ENCODE measurements at regions of chr22 and their contacts with region 1.

Region 1: DNA sequence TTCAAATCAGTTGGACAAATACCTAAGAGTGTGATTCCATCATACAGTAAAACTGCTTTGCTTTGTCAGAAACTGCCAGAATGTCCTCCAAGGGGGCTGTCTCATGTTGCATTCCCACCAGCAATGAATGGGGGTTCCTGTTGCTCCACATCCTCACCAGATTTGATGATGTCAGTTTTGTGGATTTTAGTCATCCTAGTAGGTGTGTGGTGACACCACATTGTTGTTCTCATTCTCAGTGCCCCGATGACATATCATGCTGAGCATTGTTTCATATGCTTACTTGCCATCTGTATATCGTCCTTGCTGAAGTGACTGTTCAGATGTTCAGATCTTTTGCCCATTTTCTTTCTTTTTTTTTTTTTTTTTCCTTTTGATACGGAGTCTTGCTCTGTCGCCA is 37.0 kb downstream of the CDPF1 start:
- DNase-seq: no peak
- ATAC-seq: no peak
- H3K4me3 ChIP-seq: no peak overlapping the region
- H3K4me3 Mint-ChIP-seq: no peak overlapping the region
- H3K27ac ChIP-seq: no peak overlapping the region
- H3K27ac Mint-ChIP-seq: no peak overlapping the region
- H3K4me1 ChIP-seq: no peaks in the 10 kb centered on the region
- H3K4me1 Mint-ChIP-seq: no peaks in the 10 kb centered on the region
- H3K27me3 ChIP-seq: no peaks in the 10 kb centered on the region
- H3K27me3 Mint-ChIP-seq: no peaks in the 10 kb centered on the region

Region 2: DNA sequence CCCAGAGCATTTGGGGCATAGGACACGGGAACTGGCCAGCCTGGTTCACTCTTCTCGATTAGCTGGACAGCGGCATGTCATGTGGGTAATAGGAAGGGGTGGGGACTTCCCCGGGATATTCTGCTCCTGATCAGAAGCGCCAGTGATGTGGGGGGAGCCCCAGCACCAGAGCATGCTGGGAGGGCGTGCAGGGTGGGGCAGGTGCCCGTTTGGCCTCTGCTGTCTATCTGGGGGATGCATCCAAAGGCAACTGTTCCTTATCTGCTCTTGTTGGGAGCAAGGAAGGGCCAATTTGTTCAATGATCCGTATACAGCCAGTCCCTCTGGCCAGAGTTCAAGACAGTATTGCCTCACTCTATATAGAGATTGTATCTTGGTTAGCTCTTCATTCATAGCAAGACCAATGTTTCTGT is 19.1 kb before region 1 on chr22:
- CTCF ChIA-PET with region 1: interaction called in 1 of 2 experiments, 6 read pairs
- POLR2A ChIA-PET with region 1: interaction called in 1 of 2 experiments, 17 read pairs
- DNase-seq: no peak
- ATAC-seq: no peak
- H3K4me3 ChIP-seq: no peak overlapping the region
- H3K4me3 Mint-ChIP-seq: no peak overlapping the region
- H3K27ac ChIP-seq: no peak overlapping the region
- H3K27ac Mint-ChIP-seq: no peak overlapping the region
- H3K4me1 ChIP-seq: no peaks in the 10 kb centered on the region
- H3K4me1 Mint-ChIP-seq: peaks cover 0 to 1% (median 0%) of the 10 kb centered on the region in 3 donors
- H3K27me3 ChIP-seq: no peaks in the 10 kb centered on the region
- H3K27me3 Mint-ChIP-seq: no peaks in the 10 kb centered on the region

Region 3: DNA sequence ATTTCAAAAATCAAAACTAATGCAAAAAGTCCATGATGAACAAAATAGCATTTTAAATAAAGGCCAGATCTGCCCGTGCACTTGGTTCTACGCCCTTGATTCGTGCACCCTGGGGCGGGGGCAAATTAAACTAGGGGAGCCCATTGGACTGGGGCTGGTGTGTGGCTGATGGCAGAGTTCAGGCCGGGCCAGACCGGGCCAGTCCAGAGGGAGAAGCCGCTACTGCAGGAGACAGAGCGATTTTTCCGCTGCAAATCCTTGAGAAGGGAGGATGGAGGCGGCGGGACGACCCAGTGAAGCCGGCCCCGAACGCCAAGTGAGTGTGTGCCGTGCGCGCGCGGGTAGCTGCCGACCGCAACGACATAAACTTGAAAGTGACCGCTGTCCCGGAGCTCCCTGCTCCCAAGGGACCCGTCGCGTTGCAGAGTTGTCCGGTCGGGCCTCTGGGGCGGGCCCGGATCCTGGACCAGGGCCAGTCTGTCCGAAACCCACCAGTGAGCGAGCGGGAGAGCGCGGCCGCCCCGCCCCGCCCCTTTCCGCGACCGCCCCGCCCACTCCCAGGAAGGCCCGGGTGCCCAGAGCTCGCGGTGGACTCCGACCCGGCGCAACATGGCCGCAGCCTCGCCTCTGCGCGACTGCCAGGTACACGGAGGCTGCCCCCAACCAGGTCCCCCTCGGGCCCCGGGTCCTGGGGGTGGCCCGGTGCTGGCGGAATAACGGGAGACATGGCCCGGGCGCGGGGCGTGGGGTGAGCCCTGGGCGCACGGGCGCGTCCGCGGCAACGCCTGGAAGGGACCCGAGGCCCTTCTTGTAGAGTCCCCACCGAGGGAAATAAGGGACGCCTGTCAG is 54.6 kb after region 1 on chr22 and contains the start of gene TTC38:
- CTCF ChIA-PET with region 1: no interaction called
- POLR2A ChIA-PET with region 1: interaction called in 1 of 2 experiments, 11 read pairs
- DNase-seq: peak in 25 of 35 experiments; percentile 15 to 65 (median 39)
- ATAC-seq: peak; percentile 82 to 90 (median 86)
- H3K4me3 ChIP-seq: peak within 1 kb of the TSS; percentile 71 to 84
- H3K4me3 Mint-ChIP-seq: peak within 1 kb of the TSS; percentile 89 to 95 (median 90)
- H3K27ac ChIP-seq: no peak within 1 kb of the TSS
- H3K27ac Mint-ChIP-seq: peak within 1 kb of the TSS; percentile 64 to 65
- H3K4me1 ChIP-seq: peaks cover 0 to 31% of the 10 kb centered on the region in 2 experiments
- H3K4me1 Mint-ChIP-seq: peaks cover 15 to 25% (median 20%) of the 10 kb centered on the region in 3 donors
- H3K27me3 ChIP-seq: peaks cover 2 to 25% of the 10 kb centered on the region in 2 experiments
- H3K27me3 Mint-ChIP-seq: peaks cover 20 to 21% of the 10 kb centered on the region in 2 donors
- total RNA-seq, gene TTC38: 6.8 to 21.6 (median 9.5) TPM

Measured in T-cell (primary cell).